ENCODE measurements at regions of chr4 and their contacts with region 1.

Region 1: GRCh38 chr4:122003335-122003734 is 51.5 kb upstream of the TRPC3 start:
- DNase-seq: peak; percentile 28
- H3K4me3 Mint-ChIP-seq: no peak overlapping the region
- H3K27ac Mint-ChIP-seq: no peak overlapping the region
- H3K4me1 Mint-ChIP-seq: no peaks in the 10 kb centered on the region
- H3K27me3 Mint-ChIP-seq: peaks cover 7% of the 10 kb centered on the region

Region 2: DNA sequence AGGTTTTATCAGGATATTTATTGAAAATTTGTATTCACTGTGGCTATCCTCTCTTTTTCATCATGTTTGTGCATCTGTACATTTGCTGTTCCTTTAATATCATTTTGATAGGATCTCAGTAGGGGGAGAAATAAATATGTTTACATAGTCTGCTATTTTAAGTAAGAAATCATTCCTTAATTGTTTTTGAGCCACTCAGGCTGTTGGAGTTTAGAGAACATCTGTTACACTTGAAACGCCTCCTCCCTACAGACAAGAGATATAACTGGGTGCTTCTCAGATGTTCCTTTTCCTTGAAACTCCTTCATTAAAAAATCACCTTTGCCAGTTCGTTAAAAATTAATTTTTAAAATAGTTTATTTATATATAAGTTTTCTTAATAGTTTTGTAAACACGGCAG is 681.9 kb before region 1 on chr4:
- CTCF ChIA-PET with region 1: no interaction called
- POLR2A ChIA-PET with region 1: no interaction called
- intact Hi-C with region 1: no loop called
- DNase-seq: no peak
- H3K4me3 Mint-ChIP-seq: no peak overlapping the region
- H3K27ac Mint-ChIP-seq: no peak overlapping the region
- H3K4me1 Mint-ChIP-seq: no peaks in the 10 kb centered on the region
- H3K27me3 Mint-ChIP-seq: peaks cover 13% of the 10 kb centered on the region

Region 3: DNA sequence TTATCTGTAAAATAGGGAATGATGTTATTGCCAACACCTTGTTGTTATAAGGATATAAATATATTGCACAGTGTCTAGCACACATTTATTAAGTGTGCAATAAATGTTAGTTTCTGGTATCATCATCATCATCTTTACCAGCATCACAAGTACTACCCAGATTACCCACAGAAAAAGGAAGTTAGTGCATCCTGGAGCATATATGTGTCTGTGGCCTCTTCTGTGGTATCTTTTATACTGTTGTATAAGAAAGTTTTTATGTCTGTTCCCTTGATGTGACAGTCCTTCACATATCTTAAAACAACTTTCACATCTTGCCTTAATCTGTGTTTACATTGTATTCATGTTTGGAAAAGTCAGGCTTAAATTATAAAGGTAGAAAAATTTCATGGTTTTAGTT is 192.2 kb before region 1 on chr4:
- CTCF ChIA-PET with region 1: no interaction called
- POLR2A ChIA-PET with region 1: no interaction called
- intact Hi-C with region 1: no loop called
- DNase-seq: no peak
- H3K4me3 Mint-ChIP-seq: no peak overlapping the region
- H3K27ac Mint-ChIP-seq: no peak overlapping the region
- H3K4me1 Mint-ChIP-seq: peaks cover 3% of the 10 kb centered on the region
- H3K27me3 Mint-ChIP-seq: no peaks in the 10 kb centered on the region

Region 4: GRCh38 chr4:121900132-121900983 is 103.0 kb before region 1 on chr4:
- CTCF ChIA-PET with region 1: interaction called, 14 read pairs
- POLR2A ChIA-PET with region 1: no interaction called
- intact Hi-C with region 1: loop called (anchors 5 kb)
- DNase-seq: peak; percentile 58
- H3K4me3 Mint-ChIP-seq: no peak overlapping the region
- H3K27ac Mint-ChIP-seq: no peak overlapping the region
- H3K4me1 Mint-ChIP-seq: peaks cover 8% of the 10 kb centered on the region
- H3K27me3 Mint-ChIP-seq: peaks cover 6% of the 10 kb centered on the region

Measured in activated CD4-positive, alpha-beta memory T cell treated with anti-CD3 and anti-CD28 coated beads for 36 hours (primary cell).